K562 (cell line): ENCODE measurements at regions of chr16 and their contacts with region 1.

Region 1: DNA sequence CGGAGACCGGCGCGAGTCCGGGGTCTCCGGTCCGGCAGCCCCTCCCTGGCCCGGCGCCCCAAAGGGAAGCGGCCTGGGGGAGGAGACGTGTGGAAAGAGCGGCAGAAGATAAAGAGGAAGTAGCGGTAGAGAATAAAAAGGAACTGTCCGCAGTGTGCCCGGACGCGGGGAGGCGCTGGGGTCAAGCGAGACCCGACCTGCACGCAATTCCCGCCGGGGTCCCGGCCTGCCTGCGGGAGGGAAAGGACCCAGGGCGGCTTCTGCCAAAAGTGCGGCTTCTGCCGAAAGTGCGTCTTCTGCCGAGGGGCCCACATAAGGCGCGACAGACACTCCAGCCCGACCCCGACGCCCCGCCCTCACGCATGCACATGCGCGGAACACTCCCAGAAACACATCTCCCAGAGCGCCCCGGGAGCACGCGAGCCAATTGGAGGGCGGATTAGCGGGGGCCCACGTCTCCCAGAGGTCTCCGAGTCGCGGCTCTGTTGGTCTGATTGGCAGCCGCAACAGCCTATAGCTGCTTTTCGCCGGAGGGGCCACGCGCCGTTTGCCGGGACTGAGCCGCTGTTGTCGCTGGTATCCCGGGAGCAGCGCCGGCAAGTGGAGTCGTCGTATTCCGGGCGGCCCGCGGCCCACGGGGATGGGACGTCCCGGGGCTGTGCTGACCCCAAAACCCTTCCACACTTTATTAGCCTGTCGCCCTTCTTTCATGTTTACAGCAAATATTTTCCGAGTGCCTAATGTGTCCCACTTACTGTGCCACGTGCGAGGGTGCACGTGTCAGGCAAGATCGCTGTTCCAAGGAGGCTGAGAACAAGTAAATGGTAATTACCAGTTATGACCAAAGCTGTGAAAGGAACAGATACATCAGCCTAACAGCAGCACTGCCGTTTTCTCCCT is 8.0 kb upstream of the MEFV start:
- DNase-seq: peak; percentile 97 to 98 (median 97)
- ATAC-seq: peak; percentile 97
- H3K4me3 ChIP-seq: peak overlapping the region; percentile 65
- H3K27ac ChIP-seq: peak overlapping the region; percentile 75
- H3K4me1 ChIP-seq: peaks cover 4 to 21% of the 10 kb centered on the region in 2 experiments; a peak in 4 of 5 replicates
- H3K27me3 ChIP-seq: peaks cover under 1 to 2% of the 10 kb centered on the region in 2 experiments; a peak in 2 of 5 replicates
- CTCF ChIP-seq: peak; percentile 65 to 67 (median 67)
- EP300 ChIP-seq: no peak; the same call in 1 of the 2 replicates
- POLR2A ChIP-seq: peak; percentile 84
- RAD21 ChIP-seq: peak; percentile 54 to 72

Region 2: GRCh38 chr16:3252967-3253366 is 11.4 kb before region 1 on chr16:
- CTCF ChIA-PET with region 1: no interaction called
- POLR2A ChIA-PET with region 1: interaction called, 12 read pairs
- in situ Hi-C with region 1: no loop called
- intact Hi-C with region 1: no loop called
- DNase-seq: no peak
- ATAC-seq: no peak
- H3K4me3 ChIP-seq: no peak overlapping the region
- H3K27ac ChIP-seq: no peak overlapping the region
- H3K4me1 ChIP-seq: peaks cover 0 to 13% of the 10 kb centered on the region in 2 experiments; a peak in 1 of 5 replicates
- H3K27me3 ChIP-seq: peaks cover 26 to 66% of the 10 kb centered on the region in 2 experiments
- CTCF ChIP-seq: no peak
- EP300 ChIP-seq: no peak
- POLR2A ChIP-seq: no peak
- RAD21 ChIP-seq: no peak

Region 3: DNA sequence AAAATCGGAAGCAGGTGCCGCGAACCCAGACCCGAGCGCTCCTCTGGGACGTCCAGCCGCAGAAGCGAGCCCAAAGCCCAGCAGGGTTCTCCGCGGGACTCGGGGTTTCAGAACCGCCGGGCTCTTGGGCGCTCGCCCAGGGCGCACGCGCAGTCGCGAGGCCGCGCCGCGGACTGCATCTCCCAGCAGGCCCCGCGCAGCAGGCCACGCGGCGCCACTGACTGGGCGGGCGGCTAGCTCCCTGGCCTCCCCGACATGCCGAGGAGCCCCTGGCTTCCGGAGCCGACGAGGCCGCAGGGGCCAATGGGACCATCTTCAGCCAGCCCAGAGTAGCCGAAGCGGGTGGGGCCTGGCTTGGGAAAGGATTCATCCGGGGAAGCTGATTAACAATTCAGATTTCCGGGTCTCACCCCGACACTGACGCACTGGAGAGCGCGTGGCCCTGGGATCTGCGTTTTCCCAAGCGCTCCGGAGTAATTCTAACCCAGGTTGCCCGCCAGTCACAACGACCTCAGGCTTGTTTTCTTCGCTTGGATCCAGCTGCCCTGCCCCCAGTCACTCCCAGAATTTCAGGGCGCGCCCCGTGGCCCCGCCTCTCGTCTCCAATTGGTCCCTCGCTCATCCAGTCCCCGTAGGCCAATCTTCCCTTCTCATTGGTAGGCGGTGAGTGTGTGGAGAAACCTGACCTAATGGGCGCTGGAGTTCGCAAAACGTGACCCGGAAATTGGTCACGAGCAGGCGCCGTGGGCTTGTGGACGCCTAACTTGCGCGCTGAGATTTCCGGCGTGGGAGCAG is 18.5 kb after region 1 on chr16 and contains the start of gene ZNF263:
- CTCF ChIA-PET with region 1: no interaction called
- POLR2A ChIA-PET with region 1: interaction called, 9 read pairs
- in situ Hi-C with region 1: no loop called
- intact Hi-C with region 1: loop called (anchors 2 kb)
- DNase-seq: peak; percentile 94 to 98 (median 97)
- ATAC-seq: peak; percentile 97
- H3K4me3 ChIP-seq: peak within 1 kb of the TSS; percentile 93
- H3K27ac ChIP-seq: peak within 1 kb of the TSS; percentile 100
- H3K4me1 ChIP-seq: peaks cover 8 to 22% of the 10 kb centered on the region in 2 experiments; a peak in 4 of 5 replicates
- H3K27me3 ChIP-seq: no peaks in the 10 kb centered on the region
- CTCF ChIP-seq: no peak
- EP300 ChIP-seq: no peak; the same call in 1 of the 2 replicates
- POLR2A ChIP-seq: peak; percentile 91
- RAD21 ChIP-seq: no peak
- polyA plus RNA-seq, gene ZNF263: 4.6 to 4.8 TPM

Region 4: GRCh38 chr16:3317315-3317999 is 53.1 kb after region 1 on chr16:
- CTCF ChIA-PET with region 1: no interaction called
- POLR2A ChIA-PET with region 1: no interaction called
- in situ Hi-C with region 1: no loop called
- intact Hi-C with region 1: no loop called
- DNase-seq: no peak
- ATAC-seq: no peak
- H3K4me3 ChIP-seq: no peak overlapping the region
- H3K27ac ChIP-seq: no peak overlapping the region
- H3K4me1 ChIP-seq: no peaks in the 10 kb centered on the region
- H3K27me3 ChIP-seq: no peaks in the 10 kb centered on the region
- CTCF ChIP-seq: no peak
- EP300 ChIP-seq: no peak
- POLR2A ChIP-seq: no peak
- RAD21 ChIP-seq: no peak

Region 5: DNA sequence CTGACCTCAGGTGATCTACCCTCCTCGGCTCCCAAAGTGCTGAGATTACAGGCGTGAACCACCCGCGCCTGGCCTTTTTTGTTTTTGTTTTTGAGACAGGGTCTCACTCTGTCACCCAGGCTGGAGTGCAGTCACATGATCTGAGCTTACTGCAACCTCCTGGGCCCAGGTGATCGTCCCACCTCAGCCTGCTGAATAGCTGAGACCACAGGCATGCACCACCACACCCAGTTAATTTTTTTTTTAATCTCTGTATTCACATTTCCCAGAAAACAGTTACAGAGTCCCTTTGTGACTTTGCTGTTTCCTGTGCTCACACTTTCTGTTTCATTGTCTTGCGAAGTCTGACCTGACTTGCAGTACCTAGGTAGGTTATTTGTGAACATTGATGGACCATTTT is 239.1 kb after region 1 on chr16:
- CTCF ChIA-PET with region 1: interaction called, 4 read pairs
- POLR2A ChIA-PET with region 1: no interaction called
- in situ Hi-C with region 1: no loop called
- intact Hi-C with region 1: loop called (anchors 5 kb)
- DNase-seq: no peak
- ATAC-seq: no peak
- H3K4me3 ChIP-seq: no peak overlapping the region
- H3K27ac ChIP-seq: no peak overlapping the region
- H3K4me1 ChIP-seq: peaks cover 2 to 27% of the 10 kb centered on the region in 2 experiments; a peak in 3 of 5 replicates
- H3K27me3 ChIP-seq: no peaks in the 10 kb centered on the region
- CTCF ChIP-seq: no peak
- EP300 ChIP-seq: no peak
- POLR2A ChIP-seq: no peak
- RAD21 ChIP-seq: no peak